ENCODE measurements at regions of chr4 and their contacts with region 1.

Region 1: GRCh38 chr4:37603070-37603468 is 83.1 kb downstream of the RELL1 start:
- DNase-seq: peak; percentile 62 to 73 (median 69)
- H3K4me3 ChIP-seq: peak overlapping the region in 1 of 3 experiments; percentile 16
- H3K4me3 Mint-ChIP-seq: peak overlapping the region in 1 of 2 donors; percentile 83
- H3K27ac ChIP-seq: no peak overlapping the region
- H3K27ac Mint-ChIP-seq: peak overlapping the region in 3 of 7 donors; percentile 23 to 63 (median 39)
- H3K4me1 ChIP-seq: peaks cover 44 to 51% of the 10 kb centered on the region in 2 donors
- H3K4me1 Mint-ChIP-seq: peaks cover 62% of the 10 kb centered on the region
- H3K27me3 ChIP-seq: no peaks in the 10 kb centered on the region
- H3K27me3 Mint-ChIP-seq: peaks cover 0 to 2% (median 0%) of the 10 kb centered on the region in 3 donors
- CTCF ChIP-seq: peak; percentile 98

Region 2: GRCh38 chr4:37452952-37453280 is 150.2 kb before region 1 on chr4:
- intact Hi-C with region 1: no loop called
- DNase-seq: peak; percentile 10 to 39 (median 22)
- H3K4me3 ChIP-seq: peak overlapping the region in 1 of 3 experiments; percentile 81
- H3K4me3 Mint-ChIP-seq: peak overlapping the region; percentile 78 to 89
- H3K27ac ChIP-seq: no peak overlapping the region
- H3K27ac Mint-ChIP-seq: peak overlapping the region in 1 of 7 donors; percentile 63
- H3K4me1 ChIP-seq: peaks cover 13 to 16% of the 10 kb centered on the region in 2 donors
- H3K4me1 Mint-ChIP-seq: peaks cover 16% of the 10 kb centered on the region
- H3K27me3 ChIP-seq: peaks cover 36 to 52% of the 10 kb centered on the region in 2 donors
- H3K27me3 Mint-ChIP-seq: peaks cover 38 to 53% (median 43%) of the 10 kb centered on the region in 3 donors
- CTCF ChIP-seq: peak; percentile 45

Region 3: DNA sequence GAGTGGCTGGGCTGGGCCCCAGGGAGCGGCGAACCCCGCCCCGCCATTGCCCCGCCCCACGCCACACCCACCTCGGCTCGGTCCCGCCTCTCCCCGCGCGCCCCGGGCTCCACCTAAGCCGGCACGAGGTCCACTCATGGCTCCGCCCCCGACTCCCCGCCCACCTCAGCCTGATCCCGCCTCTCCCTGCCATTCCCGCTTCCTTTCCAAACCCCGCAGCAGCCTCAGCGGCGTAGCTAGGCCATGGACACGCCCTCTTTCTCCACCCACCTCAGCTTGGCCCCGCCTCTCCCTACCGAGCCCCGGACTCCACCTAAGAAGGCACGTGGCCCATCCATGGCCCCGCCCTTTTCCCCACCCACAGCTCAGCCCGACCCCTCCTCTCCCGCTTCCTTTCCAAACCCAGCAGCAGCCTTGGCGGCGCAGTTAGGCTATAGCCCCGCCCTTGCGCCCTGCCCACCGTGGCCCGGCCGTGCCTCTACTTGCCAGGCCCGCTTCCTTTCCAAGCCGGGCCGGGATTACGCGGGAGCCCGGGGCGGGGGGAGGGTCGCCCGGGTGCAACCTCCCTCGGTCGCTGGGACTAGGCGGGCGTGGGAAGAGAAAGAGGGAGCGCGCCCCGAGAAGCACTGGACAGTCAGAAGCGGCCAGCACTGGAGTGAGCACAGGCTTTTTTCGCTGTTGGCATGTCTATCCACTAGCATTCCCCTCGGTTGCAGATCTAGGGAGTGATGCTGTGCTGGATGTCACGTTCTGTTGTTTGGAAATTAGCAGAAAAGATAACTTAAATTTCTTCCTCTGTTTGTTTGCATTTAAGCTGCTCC is 83.5 kb after region 1 on chr4 and contains the start of gene RELL1:
- intact Hi-C with region 1: loop called in 1 of 2 experiments (anchors 5 kb)
- DNase-seq: peak; percentile 96 to 100 (median 99)
- H3K4me3 ChIP-seq: peak within 1 kb of the TSS; percentile 81 to 93 (median 89)
- H3K4me3 Mint-ChIP-seq: peak within 1 kb of the TSS; percentile 88 to 89
- H3K27ac ChIP-seq: peak within 1 kb of the TSS; percentile 78 to 90
- H3K27ac Mint-ChIP-seq: peak within 1 kb of the TSS; percentile 85 to 97 (median 91)
- H3K4me1 ChIP-seq: peaks cover 41 to 54% of the 10 kb centered on the region in 2 donors
- H3K4me1 Mint-ChIP-seq: peaks cover 50% of the 10 kb centered on the region
- H3K27me3 ChIP-seq: no peaks in the 10 kb centered on the region
- H3K27me3 Mint-ChIP-seq: no peaks in the 10 kb centered on the region
- CTCF ChIP-seq: no peak
- polyA plus RNA-seq, gene RELL1: 13.3 to 30.2 (median 16.2) TPM

Region 4: DNA sequence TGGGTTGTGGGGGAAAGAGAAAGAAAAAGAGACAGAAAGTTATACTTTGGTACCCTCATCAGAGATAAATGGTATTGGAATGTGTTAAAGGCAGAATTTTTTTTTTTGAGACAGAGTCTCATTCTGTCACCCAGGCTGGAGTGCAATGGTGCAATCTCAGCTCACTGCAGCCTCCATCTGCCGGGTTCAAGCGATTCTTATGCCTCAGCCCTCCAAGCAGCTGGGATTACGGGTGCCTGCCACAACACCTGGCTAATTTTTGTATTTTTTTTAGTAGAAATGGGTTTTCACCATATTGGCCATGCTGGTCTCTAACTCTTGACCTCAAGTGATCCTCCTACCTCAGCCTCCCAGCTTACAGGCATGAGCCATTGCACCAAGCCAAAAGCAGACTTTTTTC is 94.5 kb after region 1 on chr4:
- intact Hi-C with region 1: no loop called
- DNase-seq: no peak
- H3K4me3 ChIP-seq: no peak overlapping the region
- H3K4me3 Mint-ChIP-seq: no peak overlapping the region
- H3K27ac ChIP-seq: no peak overlapping the region
- H3K27ac Mint-ChIP-seq: no peak overlapping the region
- H3K4me1 ChIP-seq: no peaks in the 10 kb centered on the region
- H3K4me1 Mint-ChIP-seq: no peaks in the 10 kb centered on the region
- H3K27me3 ChIP-seq: no peaks in the 10 kb centered on the region
- H3K27me3 Mint-ChIP-seq: peaks cover 0 to 1% (median 0%) of the 10 kb centered on the region in 3 donors
- CTCF ChIP-seq: no peak

Region 5: GRCh38 chr4:37754410-37755185 is 151.5 kb after region 1 on chr4:
- intact Hi-C with region 1: no loop called
- DNase-seq: peak; percentile 53 to 83 (median 77)
- H3K4me3 ChIP-seq: peak overlapping the region; percentile 19 to 64 (median 62)
- H3K4me3 Mint-ChIP-seq: peak overlapping the region; percentile 78 to 92
- H3K27ac ChIP-seq: peak overlapping the region; percentile 92 to 93
- H3K27ac Mint-ChIP-seq: peak overlapping the region; percentile 96 to 99 (median 97)
- H3K4me1 ChIP-seq: peaks cover 85 to 89% of the 10 kb centered on the region in 2 donors
- H3K4me1 Mint-ChIP-seq: peaks cover 73% of the 10 kb centered on the region
- H3K27me3 ChIP-seq: no peaks in the 10 kb centered on the region
- H3K27me3 Mint-ChIP-seq: no peaks in the 10 kb centered on the region
- CTCF ChIP-seq: no peak

Region 6: DNA sequence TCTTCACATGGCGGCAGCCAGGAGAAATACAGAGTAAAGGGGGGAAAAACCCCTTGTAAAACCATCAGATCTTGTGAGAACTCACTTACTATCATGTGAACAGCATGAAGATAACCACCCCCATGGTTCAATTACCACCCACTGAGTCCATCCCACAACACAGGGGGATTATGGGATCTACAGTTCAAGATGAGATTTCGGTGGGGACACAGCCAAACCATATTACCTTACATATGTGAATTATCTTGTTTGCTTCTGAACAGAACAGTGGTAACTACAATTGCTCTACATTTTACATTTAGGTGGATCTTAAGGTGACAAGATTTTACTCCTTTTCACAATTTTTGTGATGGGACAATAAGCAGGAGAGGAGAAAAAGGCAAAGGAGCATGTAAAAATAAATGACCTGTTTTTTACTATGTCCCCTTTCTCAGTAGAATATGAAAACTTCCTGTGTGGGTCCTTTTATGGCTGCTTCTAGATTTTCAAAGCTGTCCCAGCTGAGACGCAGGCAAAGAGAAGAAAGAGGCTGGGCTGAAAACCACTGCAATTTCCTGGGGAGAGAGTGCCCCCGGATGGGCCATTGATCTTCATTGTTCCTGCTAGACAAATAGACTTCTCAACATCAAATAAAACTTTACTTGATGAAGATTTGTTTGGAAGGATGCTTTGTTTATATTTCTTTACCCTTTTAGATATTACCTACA is 177.5 kb after region 1 on chr4:
- intact Hi-C with region 1: loop called in 1 of 2 experiments (anchors 10 kb)
- DNase-seq: peak in 2 of 3 donors; percentile 12 to 17
- H3K4me3 ChIP-seq: no peak overlapping the region
- H3K4me3 Mint-ChIP-seq: no peak overlapping the region
- H3K27ac ChIP-seq: peak overlapping the region in 1 of 2 donors; percentile 17
- H3K27ac Mint-ChIP-seq: peak overlapping the region in 5 of 7 donors; percentile 63 to 73 (median 70)
- H3K4me1 ChIP-seq: peaks cover 7 to 12% of the 10 kb centered on the region in 2 donors
- H3K4me1 Mint-ChIP-seq: peaks cover 14% of the 10 kb centered on the region
- H3K27me3 ChIP-seq: no peaks in the 10 kb centered on the region
- H3K27me3 Mint-ChIP-seq: no peaks in the 10 kb centered on the region
- CTCF ChIP-seq: peak; percentile 19

Region 7: GRCh38 chr4:37793562-37793961 is 190.5 kb after region 1 on chr4:
- intact Hi-C with region 1: loop called (anchors 10 kb)
- DNase-seq: peak; percentile 31 to 47 (median 41)
- H3K4me3 ChIP-seq: no peak overlapping the region
- H3K4me3 Mint-ChIP-seq: no peak overlapping the region
- H3K27ac ChIP-seq: no peak overlapping the region
- H3K27ac Mint-ChIP-seq: no peak overlapping the region
- H3K4me1 ChIP-seq: peaks cover 10 to 11% of the 10 kb centered on the region in 2 donors
- H3K4me1 Mint-ChIP-seq: peaks cover 14% of the 10 kb centered on the region
- H3K27me3 ChIP-seq: no peaks in the 10 kb centered on the region
- H3K27me3 Mint-ChIP-seq: peaks cover 0 to 4% (median 3%) of the 10 kb centered on the region in 3 donors
- CTCF ChIP-seq: peak; percentile 64

Region 8: GRCh38 chr4:37826295-37827029 is 223.4 kb after region 1 on chr4 and contains the start of gene PGM2:
- intact Hi-C with region 1: loop called in 1 of 2 experiments (anchors 10 kb)
- DNase-seq: peak; percentile 65 to 73 (median 69)
- H3K4me3 ChIP-seq: peak within 1 kb of the TSS; percentile 53 to 99 (median 69)
- H3K4me3 Mint-ChIP-seq: peak within 1 kb of the TSS; percentile 98 to 100
- H3K27ac ChIP-seq: peak within 1 kb of the TSS; percentile 40 to 86
- H3K27ac Mint-ChIP-seq: peak within 1 kb of the TSS; percentile 87 to 98 (median 97)
- H3K4me1 ChIP-seq: peaks cover 23 to 33% of the 10 kb centered on the region in 2 donors
- H3K4me1 Mint-ChIP-seq: peaks cover 40% of the 10 kb centered on the region
- H3K27me3 ChIP-seq: no peaks in the 10 kb centered on the region
- H3K27me3 Mint-ChIP-seq: peaks cover 0 to 2% (median 0%) of the 10 kb centered on the region in 3 donors
- CTCF ChIP-seq: no peak
- polyA plus RNA-seq, gene PGM2: 17.8 to 48.6 (median 46.2) TPM

Region 9: GRCh38 chr4:38034986-38035882 is 432.2 kb after region 1 on chr4:
- intact Hi-C with region 1: loop called in 1 of 2 experiments (anchors 5 kb)
- DNase-seq: peak; percentile 33 to 63 (median 50)
- H3K4me3 ChIP-seq: no peak overlapping the region
- H3K4me3 Mint-ChIP-seq: no peak overlapping the region
- H3K27ac ChIP-seq: peak overlapping the region in 1 of 2 donors; percentile 30
- H3K27ac Mint-ChIP-seq: peak overlapping the region in 1 of 7 donors; percentile 25
- H3K4me1 ChIP-seq: no peaks in the 10 kb centered on the region
- H3K4me1 Mint-ChIP-seq: peaks cover under 1% of the 10 kb centered on the region
- H3K27me3 ChIP-seq: no peaks in the 10 kb centered on the region
- H3K27me3 Mint-ChIP-seq: no peaks in the 10 kb centered on the region
- CTCF ChIP-seq: peak; percentile 79